Activated T-helper 1 cell treated with anti-CD3 and anti-CD28 coated beads, Interleukin-12 subunit alpha, Interleukin-12 subunit beta, Interleukin-2, Interleukin-4 antibody, amounts not matched to agents 30 ng/mL and 10 ng/mL and 1 ng/mL, durations not matched to agents 14 hours and 24 hours and 36 hours (primary cell): ENCODE measurements at regions of chr14 and their contacts with region 1.

Region 1: GRCh38 chr14:95561001-95561412 is 26.2 kb downstream of the GLRX5 start:
- DNase-seq: peak; percentile 78
- H3K4me3 Mint-ChIP-seq: no peak overlapping the region
- H3K27ac Mint-ChIP-seq: no peak overlapping the region
- H3K4me1 Mint-ChIP-seq: peaks cover 5% of the 10 kb centered on the region
- H3K27me3 Mint-ChIP-seq: peaks cover 6% of the 10 kb centered on the region

Region 2: DNA sequence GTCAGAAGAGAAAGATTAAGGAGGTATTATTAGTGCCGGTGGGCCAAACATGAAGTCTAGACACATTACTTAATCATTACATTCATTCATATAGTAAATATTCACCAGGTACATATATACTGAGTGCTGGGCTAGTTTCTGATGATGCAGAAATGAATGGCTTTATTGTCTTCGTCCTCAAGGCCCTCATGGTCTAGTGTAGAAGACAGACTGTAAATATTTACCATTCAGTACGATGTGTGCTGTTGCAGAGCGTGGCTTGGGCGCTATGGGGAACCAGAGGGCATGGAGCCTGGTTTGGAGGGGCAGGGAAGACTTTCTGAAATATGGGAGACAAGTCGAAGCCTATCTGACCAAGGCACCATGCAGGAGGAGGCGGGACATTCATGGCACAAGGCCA is 88.2 kb after region 1 on chr14:
- intact Hi-C with region 1: no loop called
- DNase-seq: no peak
- H3K4me3 Mint-ChIP-seq: no peak overlapping the region
- H3K27ac Mint-ChIP-seq: no peak overlapping the region
- H3K4me1 Mint-ChIP-seq: no peaks in the 10 kb centered on the region
- H3K27me3 Mint-ChIP-seq: peaks cover 2% of the 10 kb centered on the region

Region 3: DNA sequence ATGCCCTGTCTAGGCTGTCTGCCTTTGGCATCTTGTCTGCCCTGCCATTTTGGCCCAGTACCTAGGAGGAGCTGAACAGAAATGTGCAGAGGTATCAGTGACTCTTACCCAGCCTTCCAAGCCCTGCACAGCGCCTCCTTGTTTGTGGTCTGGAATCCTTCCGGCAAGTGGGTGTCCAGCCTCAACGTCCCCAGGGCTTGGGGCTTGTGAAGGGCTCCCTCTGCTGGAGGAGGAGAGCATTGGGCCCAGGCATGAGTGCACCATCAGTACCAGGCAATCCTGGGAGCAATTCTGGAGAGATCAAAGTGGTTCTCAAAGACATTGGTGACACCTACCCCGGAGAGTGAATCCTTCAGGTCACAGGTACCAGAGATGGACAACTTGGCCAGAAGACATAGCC is 122.8 kb after region 1 on chr14:
- intact Hi-C with region 1: loop called (anchors 1 kb)
- DNase-seq: no peak
- H3K4me3 Mint-ChIP-seq: no peak overlapping the region
- H3K27ac Mint-ChIP-seq: no peak overlapping the region
- H3K4me1 Mint-ChIP-seq: no peaks in the 10 kb centered on the region
- H3K27me3 Mint-ChIP-seq: peaks cover 5% of the 10 kb centered on the region

Region 4: DNA sequence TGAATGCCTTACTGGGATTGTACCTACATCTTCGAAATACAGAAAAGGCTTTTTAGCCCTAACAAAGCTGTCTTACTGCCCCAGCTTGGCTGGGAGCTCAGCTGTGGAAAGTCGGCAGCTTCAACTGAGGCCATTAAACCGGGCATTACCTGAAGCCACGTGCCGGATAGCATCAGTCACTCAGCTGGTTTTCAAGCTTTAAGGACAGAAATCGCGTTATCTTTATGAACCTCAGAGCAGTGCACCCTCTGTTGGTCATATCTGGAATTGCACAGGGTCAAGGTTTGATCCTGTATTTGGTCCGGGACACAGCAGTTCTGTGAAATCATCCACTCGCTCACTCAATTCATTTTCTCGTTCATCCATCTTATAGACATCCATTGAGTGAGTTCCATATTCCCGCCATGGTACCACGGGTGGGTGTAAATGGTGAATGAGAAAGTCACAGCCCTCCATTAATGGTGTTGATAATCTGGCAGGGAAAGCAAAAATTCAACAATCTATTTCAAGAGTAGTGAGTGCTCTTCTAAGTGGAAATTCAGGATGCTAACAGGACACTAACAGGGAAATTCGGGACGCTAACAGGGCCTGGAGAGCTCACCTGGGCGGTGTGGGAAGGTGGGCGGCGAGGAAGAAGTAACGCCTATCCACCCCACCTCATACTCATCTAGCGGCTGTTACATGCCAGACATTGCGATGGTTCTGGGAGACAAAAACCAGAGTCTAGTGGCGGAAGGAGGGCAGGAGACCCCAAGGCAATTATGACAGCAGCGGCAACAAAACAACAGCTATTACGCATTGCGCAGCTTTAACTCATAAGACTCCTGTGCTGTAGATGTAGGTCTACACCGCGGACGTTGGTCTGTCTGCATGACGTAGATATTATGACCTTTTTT is 213.5 kb after region 1 on chr14:
- intact Hi-C with region 1: loop called (anchors 1 kb)
- DNase-seq: peak; percentile 14
- H3K4me3 Mint-ChIP-seq: no peak overlapping the region
- H3K27ac Mint-ChIP-seq: no peak overlapping the region
- H3K4me1 Mint-ChIP-seq: no peaks in the 10 kb centered on the region
- H3K27me3 Mint-ChIP-seq: peaks cover 5% of the 10 kb centered on the region

Region 5: DNA sequence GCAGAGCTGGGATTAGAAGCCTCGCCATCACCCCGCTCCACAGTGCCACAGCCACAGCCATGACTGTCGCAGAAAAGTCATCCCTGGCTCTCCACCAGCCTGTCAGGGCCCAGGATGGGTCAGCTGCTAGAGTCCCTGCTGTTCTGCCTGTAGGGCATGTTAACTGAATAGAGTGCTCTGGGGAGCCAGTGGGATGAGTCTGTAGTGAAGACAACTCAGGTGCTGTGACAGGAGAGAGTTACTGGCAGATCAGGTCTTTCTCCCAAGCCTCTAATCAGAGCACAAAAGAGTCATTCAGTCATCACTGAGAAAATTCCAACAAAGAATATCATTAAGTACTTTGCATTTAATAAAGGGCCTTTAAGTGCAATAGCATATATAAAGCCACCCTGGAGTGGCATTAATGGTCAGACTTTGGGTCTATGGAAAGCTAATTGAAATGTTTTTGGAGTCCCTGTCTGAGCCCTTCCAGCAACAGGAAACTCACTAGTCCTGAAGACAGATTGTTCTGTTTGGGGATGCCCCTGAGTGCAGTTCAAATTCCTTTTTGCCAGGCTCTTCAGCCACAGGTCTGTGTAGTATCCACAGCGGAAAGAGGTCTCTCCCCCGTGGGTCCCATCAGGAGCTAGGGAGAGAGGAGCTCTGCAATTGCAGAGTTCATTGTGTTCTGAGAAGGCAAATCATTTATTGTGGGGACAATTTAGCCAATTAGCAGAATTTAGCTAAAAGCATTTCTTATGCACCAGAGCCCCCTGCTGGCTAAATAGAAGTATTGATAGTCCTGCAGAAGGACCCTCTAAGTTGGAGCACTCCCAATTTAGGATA is 433.0 kb after region 1 on chr14:
- intact Hi-C with region 1: loop called (anchors 1 kb)
- DNase-seq: peak; percentile 3
- H3K4me3 Mint-ChIP-seq: no peak overlapping the region
- H3K27ac Mint-ChIP-seq: no peak overlapping the region
- H3K4me1 Mint-ChIP-seq: no peaks in the 10 kb centered on the region
- H3K27me3 Mint-ChIP-seq: peaks cover 3% of the 10 kb centered on the region

Region 6: DNA sequence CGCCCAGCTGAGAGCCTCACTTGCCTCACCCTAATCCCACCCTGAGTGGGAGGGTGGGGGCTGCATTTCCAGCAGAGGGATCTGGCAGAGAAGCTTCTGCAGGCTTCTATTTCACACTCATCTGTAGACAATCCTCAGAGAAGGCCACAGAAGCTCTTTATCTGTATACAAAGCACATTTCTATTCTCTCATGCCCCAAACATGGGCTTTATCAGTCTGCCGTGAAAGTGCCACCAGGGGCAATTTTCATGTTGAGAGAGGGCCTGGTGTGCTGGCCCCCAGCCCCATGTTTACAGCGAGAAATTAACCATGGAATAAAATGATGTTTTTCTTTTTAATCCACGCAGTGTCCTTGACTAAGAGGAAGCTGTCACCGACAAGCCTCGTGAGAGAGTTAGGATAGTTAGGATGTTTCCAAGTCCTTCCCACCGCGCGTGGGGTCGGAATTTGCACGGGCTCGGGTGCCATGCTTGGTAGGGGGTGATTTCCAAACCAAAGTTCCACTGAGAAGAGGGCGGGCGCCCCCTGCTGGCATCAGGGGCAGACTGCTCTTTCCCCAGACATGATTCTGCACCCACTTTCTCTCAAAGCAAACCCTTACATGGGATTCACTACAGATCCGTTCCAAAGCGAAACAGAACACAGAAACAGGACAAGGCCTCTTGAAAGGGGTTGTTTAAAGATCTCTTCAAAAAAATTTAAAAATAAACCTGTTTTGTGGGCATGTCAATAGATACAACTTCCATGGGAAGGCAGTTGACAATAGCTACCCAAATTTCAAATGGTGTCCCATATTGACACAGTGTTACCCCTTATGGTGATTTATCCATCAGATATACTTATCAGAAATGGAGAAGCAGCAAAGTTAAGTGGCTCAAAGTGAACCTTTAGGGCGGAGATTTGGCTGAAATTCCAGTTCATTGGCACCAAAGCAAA is 714.4 kb after region 1 on chr14:
- intact Hi-C with region 1: loop called (anchors 1 kb)
- DNase-seq: peak; percentile 24
- H3K4me3 Mint-ChIP-seq: no peak overlapping the region
- H3K27ac Mint-ChIP-seq: no peak overlapping the region
- H3K4me1 Mint-ChIP-seq: no peaks in the 10 kb centered on the region
- H3K27me3 Mint-ChIP-seq: peaks cover 3% of the 10 kb centered on the region